HCT116 (cell line): ENCODE measurements at regions of chr1 and their contacts with region 1.

Region 1: DNA sequence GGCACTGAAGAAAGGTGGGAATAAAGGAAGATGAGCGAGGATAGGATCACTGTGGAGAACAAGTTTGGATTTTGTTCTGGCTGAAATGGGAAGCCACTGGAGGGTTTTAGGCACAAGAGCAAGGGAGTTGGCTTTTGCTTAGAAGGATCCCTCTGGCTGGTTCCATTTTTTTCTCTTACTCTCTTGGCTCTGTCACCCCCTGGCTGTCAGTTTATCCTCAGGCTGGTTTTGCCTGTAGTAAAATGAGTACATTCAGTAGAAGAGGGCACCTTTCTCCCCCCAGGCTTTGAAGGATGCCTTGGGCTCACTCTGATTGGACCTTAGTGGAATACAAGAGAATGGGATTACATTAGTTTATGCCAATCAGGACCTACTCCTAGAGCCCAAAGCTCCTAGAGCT is 17.1 kb downstream of the CACHD1 start:
- DNase-seq: no peak
- ATAC-seq: no peak
- H3K4me3 ChIP-seq: no peak overlapping the region
- H3K27ac ChIP-seq: no peak overlapping the region
- H3K4me1 ChIP-seq: peaks cover 0 to 5% of the 10 kb centered on the region in 2 experiments; a peak in 1 of 4 replicates
- H3K27me3 ChIP-seq: no peaks in the 10 kb centered on the region
- CTCF ChIP-seq: peak; percentile 15 to 35 (median 16); a peak in 3 of 6 replicates
- POLR2A ChIP-seq: no peak
- RAD21 ChIP-seq: peak; percentile 59

Region 2: GRCh38 chr1:64268653-64269557 is 218.2 kb before region 1 on chr1:
- CTCF ChIA-PET with region 1: no interaction called
- POLR2A ChIA-PET with region 1: no interaction called
- RAD21 ChIA-PET with region 1: interaction called in 1 of 2 experiments, 5 read pairs
- intact Hi-C with region 1: loop called (anchors 5 kb)
- DNase-seq: peak; percentile 80
- ATAC-seq: peak; percentile 87
- H3K4me3 ChIP-seq: no peak overlapping the region
- H3K27ac ChIP-seq: no peak overlapping the region
- H3K4me1 ChIP-seq: peaks cover 0 to 2% of the 10 kb centered on the region in 2 experiments; a peak in 2 of 4 replicates
- H3K27me3 ChIP-seq: no peaks in the 10 kb centered on the region
- CTCF ChIP-seq: peak; percentile 54 to 80 (median 63)
- POLR2A ChIP-seq: no peak
- RAD21 ChIP-seq: peak; percentile 94